Panc1 (cell line): ENCODE measurements at regions of chr2 and their contacts with region 1.

Region 1: DNA sequence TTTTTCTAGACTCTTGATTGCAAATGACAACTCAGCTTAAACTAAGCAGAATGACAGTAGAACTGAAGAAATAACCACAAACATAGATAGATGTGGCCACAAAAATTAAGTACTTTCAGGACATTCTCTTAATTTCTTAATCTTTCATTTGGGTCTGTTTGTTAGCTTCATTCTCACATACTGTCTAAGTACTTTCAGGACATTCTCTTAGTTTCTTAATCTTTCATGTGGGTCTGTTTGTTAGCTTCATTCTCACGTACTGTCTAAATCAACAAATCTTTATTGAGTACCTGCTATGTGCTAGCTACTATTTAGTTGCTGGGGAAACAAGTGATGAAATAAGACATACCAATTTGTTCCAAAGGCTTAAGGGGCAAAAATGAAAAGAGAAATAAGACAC is 35.1 kb downstream of the FAM117B start:
- DNase-seq: no peak
- ATAC-seq: no peak
- H3K4me3 ChIP-seq: no peak overlapping the region
- H3K27ac ChIP-seq: no peak overlapping the region
- H3K4me1 ChIP-seq: no peaks in the 10 kb centered on the region
- H3K27me3 ChIP-seq: no peaks in the 10 kb centered on the region
- CTCF ChIP-seq: no peak

Region 2: DNA sequence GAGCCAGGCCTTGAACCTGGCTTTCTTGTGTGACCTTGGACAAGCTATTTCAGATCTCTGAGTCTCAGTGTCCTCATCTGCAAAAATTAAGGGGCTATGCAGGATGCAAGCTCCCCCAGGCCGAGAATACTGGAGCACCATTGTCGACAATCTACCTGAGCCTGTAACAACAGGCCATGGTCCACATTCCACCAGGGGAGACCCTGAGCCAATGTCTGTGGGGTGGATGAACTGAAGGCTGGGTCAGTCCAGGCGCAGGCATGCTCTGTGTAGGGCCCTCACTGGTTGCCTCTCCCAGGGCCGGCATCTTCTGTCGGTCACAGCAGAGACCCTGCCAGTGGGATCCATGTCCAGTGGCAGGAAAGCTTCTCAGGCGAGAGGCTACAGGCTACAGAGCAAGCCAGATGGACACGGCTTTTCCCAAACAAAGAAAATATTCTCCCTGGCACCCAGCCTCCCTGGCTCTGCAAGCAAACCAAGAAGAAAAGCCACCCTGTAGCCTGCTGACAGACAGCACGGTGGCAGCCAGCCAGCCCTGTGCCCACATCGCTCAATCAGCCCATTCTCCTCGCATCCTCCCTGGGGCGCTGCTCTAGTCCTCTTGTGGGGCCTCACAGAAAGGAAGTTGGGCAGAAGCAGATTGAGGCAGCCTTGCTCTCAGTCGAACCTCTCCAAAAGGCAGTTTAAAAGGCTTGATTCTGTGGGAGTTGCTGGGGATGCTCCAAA is 684.9 kb before region 1 on chr2:
- CTCF ChIA-PET with region 1: no interaction called
- POLR2A ChIA-PET with region 1: no interaction called
- in situ Hi-C with region 1: no loop called
- intact Hi-C with region 1: no loop called
- DNase-seq: no peak
- ATAC-seq: peak; percentile 27; the same call in 1 of the 2 replicates
- H3K4me3 ChIP-seq: no peak overlapping the region
- H3K27ac ChIP-seq: no peak overlapping the region
- H3K4me1 ChIP-seq: no peaks in the 10 kb centered on the region
- H3K27me3 ChIP-seq: no peaks in the 10 kb centered on the region
- CTCF ChIP-seq: no peak

Region 3: DNA sequence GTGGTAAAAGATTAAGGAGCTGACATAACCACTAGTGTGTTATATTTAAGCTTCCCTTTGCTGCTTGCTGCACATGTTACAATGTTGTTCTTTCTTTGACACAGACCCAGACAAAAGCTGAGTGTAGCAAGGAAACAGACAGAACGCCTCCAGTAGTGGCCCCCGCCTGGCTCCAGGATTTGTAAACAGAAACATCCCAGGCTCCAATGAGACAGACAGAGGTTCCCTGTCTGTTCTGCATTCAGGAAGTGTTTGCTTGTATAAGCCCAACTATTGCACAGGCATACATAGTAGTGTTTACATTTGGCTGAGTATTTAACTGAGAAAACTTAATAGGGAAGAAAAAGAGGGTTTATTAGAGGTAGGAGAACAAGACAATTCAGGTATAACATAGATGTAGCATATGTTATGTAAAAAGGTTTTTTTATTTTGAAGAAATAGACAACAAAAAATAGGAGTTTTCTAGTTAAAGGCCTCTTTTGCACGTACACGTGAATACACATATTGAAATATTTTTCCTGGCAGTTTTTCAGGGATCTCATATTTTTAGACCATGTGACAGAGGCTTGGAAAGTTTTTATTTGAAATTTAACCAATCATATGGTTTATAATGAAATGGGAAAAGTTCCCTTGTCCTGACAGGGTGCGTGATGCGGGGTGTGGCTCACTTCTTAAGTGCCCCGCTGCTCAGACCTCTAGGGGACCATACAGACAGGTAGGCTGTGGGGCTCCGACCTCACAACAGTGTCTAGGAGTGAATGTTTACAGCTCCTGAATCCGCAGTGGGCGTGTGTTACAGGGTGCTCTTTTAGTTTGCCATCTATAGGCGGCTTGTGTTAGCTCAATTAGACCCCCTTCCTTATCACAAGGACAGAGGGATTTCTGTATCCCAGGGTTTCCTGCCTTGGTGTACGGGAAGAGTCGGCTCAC is 175.3 kb before region 1 on chr2:
- CTCF ChIA-PET with region 1: no interaction called
- POLR2A ChIA-PET with region 1: interaction called, 10 read pairs
- in situ Hi-C with region 1: no loop called
- intact Hi-C with region 1: no loop called
- DNase-seq: no peak
- ATAC-seq: peak; percentile 63; the same call in 1 of the 2 replicates
- H3K4me3 ChIP-seq: no peak overlapping the region
- H3K27ac ChIP-seq: no peak overlapping the region
- H3K4me1 ChIP-seq: no peaks in the 10 kb centered on the region; the same call in 1 of the 2 replicates
- H3K27me3 ChIP-seq: no peaks in the 10 kb centered on the region
- CTCF ChIP-seq: no peak